Common myeloid progenitor, CD34-positive (primary cell): ENCODE measurements at regions of chr3 and their contacts with region 1.

Region 1: DNA sequence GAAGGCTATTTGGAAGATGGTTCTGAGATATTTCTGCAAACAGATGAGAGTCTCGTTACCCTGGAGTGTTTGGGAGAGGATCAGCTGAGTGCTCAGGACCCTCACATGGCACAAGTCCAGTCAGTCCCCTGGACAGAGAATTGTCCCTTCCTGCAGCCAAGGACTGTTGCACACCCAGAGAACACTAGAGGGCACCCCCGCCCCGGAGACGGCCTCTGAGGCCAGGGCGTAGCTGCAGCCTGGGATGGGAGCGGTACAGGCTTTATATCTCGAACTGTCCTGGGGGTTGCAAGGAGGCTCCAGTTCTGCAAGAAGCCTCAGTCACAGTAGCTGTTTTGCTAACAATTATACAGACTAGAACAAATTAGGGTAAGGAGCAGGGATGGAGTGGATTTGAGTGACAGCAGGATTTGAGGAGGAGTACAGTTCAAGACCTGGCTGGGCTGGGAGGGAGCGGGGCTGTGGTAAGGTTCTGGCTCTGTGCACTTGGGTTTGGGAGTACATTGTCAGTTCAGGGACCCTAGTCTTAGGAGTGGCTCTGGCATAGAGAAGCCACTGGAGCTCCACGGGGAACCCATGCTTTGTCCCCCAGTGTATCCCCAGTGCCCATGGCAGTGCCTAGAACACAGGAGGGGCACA is 67.6 kb upstream of the HACD2 start:
- DNase-seq: peak; percentile 46 to 68 (median 65)
- H3K4me3 ChIP-seq: no peak overlapping the region
- H3K27ac ChIP-seq: no peak overlapping the region
- H3K4me1 ChIP-seq: peaks cover 0 to 5% (median 0%) of the 10 kb centered on the region in 4 experiments
- H3K27me3 ChIP-seq: no peaks in the 10 kb centered on the region

Region 2: GRCh38 chr3:123499322-123499721 is 153.1 kb before region 1 on chr3:
- CTCF ChIA-PET with region 1: no interaction called
- POLR2A ChIA-PET with region 1: no interaction called
- DNase-seq: no peak
- H3K4me3 ChIP-seq: no peak overlapping the region
- H3K27ac ChIP-seq: no peak overlapping the region
- H3K4me1 ChIP-seq: no peaks in the 10 kb centered on the region
- H3K27me3 ChIP-seq: no peaks in the 10 kb centered on the region

Region 3: DNA sequence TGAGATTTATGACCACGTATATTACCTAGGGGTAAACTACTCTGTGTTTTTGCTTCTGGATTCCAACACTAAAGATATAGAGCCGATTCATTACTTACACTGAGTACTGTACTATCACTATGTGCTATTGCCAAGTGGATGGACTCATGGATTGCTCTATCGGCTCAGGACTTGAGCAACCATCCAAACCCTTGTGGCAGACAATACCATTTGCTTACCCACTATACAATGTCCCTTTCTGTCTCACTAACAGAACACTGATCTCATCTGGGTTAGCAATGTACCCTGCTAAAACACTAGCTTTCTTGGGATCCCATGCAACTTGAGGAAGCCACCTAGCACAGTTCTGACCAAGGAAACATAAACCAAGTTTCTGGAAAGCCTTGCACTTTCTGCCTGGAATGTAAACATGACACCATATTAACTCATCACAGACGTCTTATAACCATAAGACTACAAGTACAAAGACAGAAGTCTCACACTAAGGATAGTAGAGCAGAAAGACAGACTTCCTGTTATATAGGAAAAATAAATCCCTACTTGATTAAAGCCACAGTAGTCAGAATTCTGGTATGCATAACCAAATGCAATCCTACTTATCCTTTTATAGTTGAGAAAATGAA is 106.2 kb before region 1 on chr3:
- CTCF ChIA-PET with region 1: no interaction called
- POLR2A ChIA-PET with region 1: no interaction called
- DNase-seq: no peak
- H3K4me3 ChIP-seq: no peak overlapping the region
- H3K27ac ChIP-seq: no peak overlapping the region
- H3K4me1 ChIP-seq: no peaks in the 10 kb centered on the region
- H3K27me3 ChIP-seq: no peaks in the 10 kb centered on the region

Region 4: GRCh38 chr3:123618768-123619484 is 33.5 kb before region 1 on chr3:
- CTCF ChIA-PET with region 1: interaction called, 10 read pairs
- POLR2A ChIA-PET with region 1: no interaction called
- DNase-seq: peak; percentile 91 to 97 (median 95)
- H3K4me3 ChIP-seq: peak overlapping the region in 5 of 7 experiments; percentile 3 to 52 (median 22)
- H3K27ac ChIP-seq: no peak overlapping the region
- H3K4me1 ChIP-seq: peaks cover 8 to 27% (median 18%) of the 10 kb centered on the region in 4 experiments
- H3K27me3 ChIP-seq: no peaks in the 10 kb centered on the region

Region 5: DNA sequence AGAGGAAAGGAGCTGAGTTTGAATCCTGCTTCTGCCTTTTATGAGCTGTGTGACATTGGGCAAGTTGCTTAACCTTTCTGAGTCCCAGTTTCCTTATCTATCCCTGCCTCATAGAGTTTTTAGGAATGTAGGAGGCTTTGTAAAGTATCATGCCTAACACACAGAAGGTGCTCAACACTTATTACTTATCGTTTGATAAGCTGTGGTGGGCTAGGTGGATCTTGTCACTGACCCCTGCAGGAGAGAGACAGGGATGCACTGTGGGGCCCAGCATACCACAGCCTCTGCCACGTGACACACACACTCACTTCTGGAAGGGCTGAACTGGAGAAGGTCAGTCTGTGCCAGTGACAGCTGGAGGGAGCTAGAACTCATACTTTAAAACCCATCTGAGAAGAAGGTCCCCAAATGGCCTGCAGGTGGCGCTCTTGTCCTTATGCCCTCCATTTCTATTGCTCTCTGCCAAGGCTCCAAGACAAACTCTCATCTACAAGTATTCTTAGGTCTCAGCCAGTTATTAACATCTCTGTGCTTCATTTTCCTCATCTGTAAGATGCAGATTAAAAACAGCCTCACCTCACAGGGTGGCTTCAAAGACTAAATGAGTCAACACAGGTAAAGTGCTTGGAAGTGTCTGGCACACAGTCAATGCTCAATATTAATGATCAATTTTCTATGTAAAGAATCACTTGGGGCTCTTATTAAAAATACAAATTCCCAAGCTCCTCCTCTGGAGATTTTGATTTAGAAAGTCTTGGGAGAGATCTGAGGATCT is 10.1 kb before region 1 on chr3:
- CTCF ChIA-PET with region 1: interaction called, 68 read pairs
- POLR2A ChIA-PET with region 1: interaction called, 3 read pairs
- DNase-seq: peak; percentile 86 to 90 (median 89)
- H3K4me3 ChIP-seq: no peak overlapping the region
- H3K27ac ChIP-seq: no peak overlapping the region
- H3K4me1 ChIP-seq: peaks cover 0 to 5% (median 0%) of the 10 kb centered on the region in 4 experiments
- H3K27me3 ChIP-seq: no peaks in the 10 kb centered on the region

Region 6: DNA sequence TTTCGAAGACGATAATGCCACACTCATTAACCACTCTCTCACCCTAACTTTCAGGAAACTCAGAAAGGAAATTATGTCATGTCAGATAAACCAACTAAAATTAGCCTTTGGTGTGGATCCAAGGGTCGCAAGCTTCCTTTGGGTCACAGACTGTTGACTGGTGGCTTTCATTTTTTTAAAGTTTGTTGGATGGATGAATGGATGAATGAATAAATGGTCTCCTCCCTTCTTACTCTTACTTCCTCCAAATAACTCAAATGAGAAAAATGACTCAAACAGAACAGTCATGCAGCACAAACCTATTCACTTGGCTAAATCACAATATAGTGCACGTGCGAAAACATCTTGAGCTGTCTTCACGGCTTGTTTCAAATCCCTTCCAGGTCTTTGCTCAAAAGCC is 15.3 kb after region 1 on chr3:
- CTCF ChIA-PET with region 1: interaction called, 42 read pairs
- POLR2A ChIA-PET with region 1: no interaction called
- DNase-seq: peak; percentile 22 to 61 (median 54)
- H3K4me3 ChIP-seq: peak overlapping the region in 2 of 7 experiments; percentile 12 to 35
- H3K27ac ChIP-seq: no peak overlapping the region
- H3K4me1 ChIP-seq: peaks cover 0 to 18% (median 12%) of the 10 kb centered on the region in 4 experiments
- H3K27me3 ChIP-seq: no peaks in the 10 kb centered on the region

Region 7: GRCh38 chr3:123678108-123678511 is 25.6 kb after region 1 on chr3:
- CTCF ChIA-PET with region 1: interaction called, 29 read pairs
- POLR2A ChIA-PET with region 1: no interaction called
- DNase-seq: no peak
- H3K4me3 ChIP-seq: no peak overlapping the region
- H3K27ac ChIP-seq: no peak overlapping the region
- H3K4me1 ChIP-seq: peaks cover 0 to 3% (median 0%) of the 10 kb centered on the region in 4 experiments
- H3K27me3 ChIP-seq: no peaks in the 10 kb centered on the region

Region 8: DNA sequence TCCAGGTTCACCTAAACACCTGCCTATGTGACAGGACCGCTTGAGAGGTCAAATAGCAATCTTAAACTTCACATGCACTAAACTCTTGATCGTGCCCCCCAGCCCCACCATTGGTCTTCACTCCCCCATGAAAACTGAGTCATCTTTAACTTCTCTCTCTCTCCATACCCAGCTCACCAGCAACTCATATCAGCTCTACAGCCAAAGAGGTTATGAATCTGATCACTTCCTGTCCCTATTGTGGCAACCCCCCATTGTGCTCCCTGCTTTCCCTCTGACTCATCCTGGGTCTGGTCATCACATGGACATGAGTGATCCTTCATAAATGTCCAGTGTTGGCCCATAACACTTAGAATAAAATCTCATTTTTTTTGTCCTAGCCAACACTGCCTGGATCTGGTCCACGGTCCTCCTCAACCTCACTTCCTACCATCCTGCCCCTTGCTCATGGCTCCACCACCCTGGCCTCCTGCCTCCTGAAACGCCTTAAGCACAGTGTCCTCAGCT is 35.8 kb after region 1 on chr3:
- CTCF ChIA-PET with region 1: interaction called, 611 read pairs
- POLR2A ChIA-PET with region 1: no interaction called
- DNase-seq: no peak
- H3K4me3 ChIP-seq: no peak overlapping the region
- H3K27ac ChIP-seq: no peak overlapping the region
- H3K4me1 ChIP-seq: peaks cover 0 to under 1% (median 0%) of the 10 kb centered on the region in 4 experiments
- H3K27me3 ChIP-seq: no peaks in the 10 kb centered on the region

Region 9: DNA sequence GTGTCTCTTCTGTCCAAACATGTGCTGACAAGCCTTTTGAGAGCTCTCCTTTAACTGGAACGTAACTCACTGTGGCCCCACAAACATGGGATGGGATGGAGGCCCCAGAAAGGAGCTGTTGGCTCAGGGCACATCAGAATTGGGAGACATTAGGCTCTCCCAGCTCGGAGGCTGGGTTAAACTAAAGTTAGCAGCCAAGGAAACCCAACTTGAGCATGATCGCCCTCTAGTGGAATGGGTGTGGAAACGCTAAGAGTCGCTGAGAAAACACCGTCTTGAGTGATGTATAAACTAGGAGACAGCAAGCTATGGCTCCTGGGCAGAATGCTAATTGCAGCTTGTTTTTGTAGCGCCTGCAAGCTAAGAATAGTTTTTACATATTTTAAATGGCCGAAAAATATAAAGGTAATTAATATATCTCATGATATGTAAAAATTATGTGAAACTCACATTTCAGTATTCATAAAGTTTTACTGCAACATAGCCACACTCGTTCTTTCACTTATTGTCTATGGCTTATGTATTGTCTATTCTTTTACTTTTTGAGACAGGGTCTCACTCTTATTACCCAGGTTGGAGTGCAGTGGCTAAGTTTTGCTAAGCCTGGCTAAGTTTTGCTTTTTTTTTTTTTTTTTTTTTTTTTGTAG is 71.2 kb after region 1 on chr3:
- CTCF ChIA-PET with region 1: interaction called, 611 read pairs
- POLR2A ChIA-PET with region 1: no interaction called
- DNase-seq: peak; percentile 78 to 91 (median 87)
- H3K4me3 ChIP-seq: peak overlapping the region in 2 of 7 experiments; percentile 22 to 64
- H3K27ac ChIP-seq: no peak overlapping the region
- H3K4me1 ChIP-seq: peaks cover 0 to 12% (median 2%) of the 10 kb centered on the region in 4 experiments
- H3K27me3 ChIP-seq: no peaks in the 10 kb centered on the region